ENCODE measurements at regions of chr12 and their contacts with region 1.

Region 1: GRCh38 chr12:76878899-76879709 is at the start of gene CSRP2:
- DNase-seq: peak; percentile 90
- H3K4me3 ChIP-seq: peak within 1 kb of the TSS; percentile 72 to 81 (median 80)
- H3K27ac ChIP-seq: peak within 1 kb of the TSS; percentile 81
- H3K4me1 ChIP-seq: peaks cover 46% of the 10 kb centered on the region
- H3K27me3 ChIP-seq: no peaks in the 10 kb centered on the region
- CTCF ChIP-seq: peak in 1 of 2 donors; percentile 13
- total RNA-seq, gene CSRP2: 21.0 to 45.9 TPM

Region 2: DNA sequence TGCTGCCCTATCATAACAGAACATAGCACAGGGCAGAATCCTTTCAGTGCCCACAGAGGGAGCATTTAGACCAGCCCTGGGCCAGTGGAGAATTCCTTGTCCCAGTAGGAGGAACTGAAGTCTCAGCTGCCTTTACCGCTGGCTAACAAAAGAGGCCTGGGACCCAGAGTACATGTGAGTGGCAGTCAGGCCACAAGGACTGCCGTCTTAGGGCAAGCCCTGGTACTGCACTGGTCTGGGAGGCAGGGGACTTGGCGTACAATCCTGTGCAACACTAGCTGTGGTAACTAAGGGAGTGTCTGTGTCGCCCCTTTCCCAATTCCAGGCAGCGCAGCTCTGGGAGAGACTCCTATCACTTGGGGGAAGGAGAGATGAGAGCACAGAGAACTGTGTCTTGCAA is 16.7 kb after region 1 on chr12:
- CTCF ChIA-PET with region 1: no interaction called
- dilution Hi-C with region 1: no loop called
- in situ Hi-C with region 1: no loop called
- intact Hi-C with region 1: no loop called
- DNase-seq: no peak
- H3K4me3 ChIP-seq: no peak overlapping the region
- H3K27ac ChIP-seq: no peak overlapping the region
- H3K4me1 ChIP-seq: peaks cover 4% of the 10 kb centered on the region
- H3K27me3 ChIP-seq: no peaks in the 10 kb centered on the region
- CTCF ChIP-seq: no peak

Region 3: GRCh38 chr12:76920172-76921014 is 41.3 kb after region 1 on chr12:
- CTCF ChIA-PET with region 1: no interaction called
- dilution Hi-C with region 1: no loop called
- in situ Hi-C with region 1: no loop called
- intact Hi-C with region 1: no loop called
- DNase-seq: no peak
- H3K4me3 ChIP-seq: no peak overlapping the region
- H3K27ac ChIP-seq: no peak overlapping the region
- H3K4me1 ChIP-seq: no peaks in the 10 kb centered on the region
- H3K27me3 ChIP-seq: no peaks in the 10 kb centered on the region
- CTCF ChIP-seq: no peak

Region 4: DNA sequence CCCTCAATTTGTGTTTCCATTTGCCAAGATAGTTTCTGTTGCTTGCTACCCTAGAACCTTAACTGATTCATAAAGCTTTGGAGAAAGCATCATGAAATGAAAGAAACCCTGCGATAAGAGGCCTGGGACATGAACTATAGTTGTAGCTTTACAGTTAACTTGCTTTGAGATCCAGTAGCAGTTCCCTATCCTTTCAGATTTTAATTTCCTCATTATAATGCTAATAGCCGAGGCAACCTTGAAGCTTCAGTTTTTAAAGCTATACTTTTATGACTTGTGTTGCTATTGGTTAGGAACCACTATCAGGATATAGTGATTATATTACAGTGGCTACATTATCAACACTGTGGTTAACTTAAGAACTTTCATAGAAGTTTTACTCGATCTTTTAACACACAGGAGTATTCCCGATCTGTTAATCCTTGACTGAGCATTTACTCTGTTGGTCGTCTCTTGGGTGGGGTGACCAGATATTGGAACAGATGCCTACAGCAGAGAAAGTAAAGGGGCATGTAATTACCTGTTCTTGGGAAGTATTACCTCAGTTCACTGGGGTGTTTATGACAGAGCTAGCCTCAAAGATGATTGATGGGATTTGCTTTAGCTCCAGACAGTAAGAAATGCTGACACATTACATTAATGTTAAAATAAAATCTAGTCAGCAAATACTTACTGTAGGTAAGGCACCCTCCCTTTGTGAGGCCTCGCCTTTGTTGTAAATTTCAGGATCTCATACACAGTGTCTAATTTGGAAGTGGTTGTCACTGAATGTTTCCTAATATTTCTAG is 85.9 kb after region 1 on chr12:
- CTCF ChIA-PET with region 1: no interaction called
- dilution Hi-C with region 1: loop called (anchors 5 kb)
- in situ Hi-C with region 1: no loop called
- intact Hi-C with region 1: no loop called
- DNase-seq: peak; percentile 70
- H3K4me3 ChIP-seq: no peak overlapping the region
- H3K27ac ChIP-seq: no peak overlapping the region
- H3K4me1 ChIP-seq: peaks cover 9% of the 10 kb centered on the region
- H3K27me3 ChIP-seq: peaks cover 3% of the 10 kb centered on the region
- CTCF ChIP-seq: no peak